Activated T-helper 1 cell treated with anti-CD3 and anti-CD28 coated beads, Interleukin-12 subunit alpha, Interleukin-12 subunit beta, Interleukin-2, Interleukin-4 antibody, amounts not matched to agents 30 ng/mL and 10 ng/mL and 1 ng/mL, durations not matched to agents 14 hours and 24 hours and 36 hours (primary cell): ENCODE measurements at regions of chr6 and their contacts with region 1.

Region 1: GRCh38 chr6:166830185-166830890 is 126.0 kb downstream of the RNASET2 start:
- DNase-seq: no peak
- H3K4me3 Mint-ChIP-seq: no peak overlapping the region
- H3K27ac Mint-ChIP-seq: peak overlapping the region; percentile 77
- H3K4me1 Mint-ChIP-seq: peaks cover 22% of the 10 kb centered on the region
- H3K27me3 Mint-ChIP-seq: peaks cover 3% of the 10 kb centered on the region

Region 2: GRCh38 chr6:166862287-166862977 is 32.1 kb after region 1 on chr6:
- intact Hi-C with region 1: loop called (anchors 2 kb)
- DNase-seq: peak; percentile 9
- H3K4me3 Mint-ChIP-seq: peak overlapping the region; percentile 80
- H3K27ac Mint-ChIP-seq: no peak overlapping the region
- H3K4me1 Mint-ChIP-seq: peaks cover 7% of the 10 kb centered on the region
- H3K27me3 Mint-ChIP-seq: peaks cover 34% of the 10 kb centered on the region

Region 3: GRCh38 chr6:166942393-166943168 is 112.2 kb after region 1 on chr6:
- intact Hi-C with region 1: loop called (anchors 1 kb)
- DNase-seq: peak; percentile 55
- H3K4me3 Mint-ChIP-seq: peak overlapping the region; percentile 50
- H3K27ac Mint-ChIP-seq: peak overlapping the region; percentile 90
- H3K4me1 Mint-ChIP-seq: peaks cover 45% of the 10 kb centered on the region
- H3K27me3 Mint-ChIP-seq: no peaks in the 10 kb centered on the region

Region 4: GRCh38 chr6:166989427-166990032 is 159.2 kb after region 1 on chr6:
- intact Hi-C with region 1: loop called (anchors 5 kb)
- DNase-seq: peak; percentile 39
- H3K4me3 Mint-ChIP-seq: no peak overlapping the region
- H3K27ac Mint-ChIP-seq: no peak overlapping the region
- H3K4me1 Mint-ChIP-seq: peaks cover 46% of the 10 kb centered on the region
- H3K27me3 Mint-ChIP-seq: peaks cover 1% of the 10 kb centered on the region

Region 5: DNA sequence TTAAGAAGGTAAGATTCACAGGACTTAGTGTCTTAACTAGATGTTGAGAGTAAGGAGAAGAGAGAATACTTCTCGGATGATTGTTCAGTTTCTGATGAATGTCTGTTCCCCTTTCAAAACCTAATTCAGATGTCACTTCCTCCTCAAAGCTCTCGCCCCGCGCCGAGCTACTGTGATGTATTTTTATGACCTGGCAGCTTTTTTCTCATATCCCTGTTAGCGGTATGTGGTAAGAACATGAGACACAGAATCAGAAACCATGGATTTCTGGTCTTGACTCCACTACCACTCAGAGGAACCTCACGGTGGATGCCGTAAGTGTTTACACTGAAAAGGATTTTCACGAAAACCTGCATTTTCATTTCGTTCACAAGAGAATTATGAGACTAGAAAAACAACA is 217.2 kb after region 1 on chr6:
- intact Hi-C with region 1: loop called (anchors 5 kb)
- DNase-seq: peak; percentile 29
- H3K4me3 Mint-ChIP-seq: peak overlapping the region; percentile 19
- H3K27ac Mint-ChIP-seq: peak overlapping the region; percentile 33
- H3K4me1 Mint-ChIP-seq: peaks cover 21% of the 10 kb centered on the region
- H3K27me3 Mint-ChIP-seq: no peaks in the 10 kb centered on the region